ENCODE measurements at regions of chr13 and their contacts with region 1.

Region 1: GRCh38 chr13:39051157-39051556 is 12.9 kb downstream of the NHLRC3 start:
- DNase-seq: peak; percentile 24
- ATAC-seq: peak; percentile 55
- H3K4me3 ChIP-seq: no peak overlapping the region
- H3K27ac ChIP-seq: no peak overlapping the region
- H3K4me1 ChIP-seq: no peaks in the 10 kb centered on the region
- H3K27me3 ChIP-seq: no peaks in the 10 kb centered on the region
- CTCF ChIP-seq: peak; percentile 26 to 61 (median 32); a peak in 4 of 6 replicates
- POLR2A ChIP-seq: no peak
- RAD21 ChIP-seq: peak; percentile 52

Region 2: DNA sequence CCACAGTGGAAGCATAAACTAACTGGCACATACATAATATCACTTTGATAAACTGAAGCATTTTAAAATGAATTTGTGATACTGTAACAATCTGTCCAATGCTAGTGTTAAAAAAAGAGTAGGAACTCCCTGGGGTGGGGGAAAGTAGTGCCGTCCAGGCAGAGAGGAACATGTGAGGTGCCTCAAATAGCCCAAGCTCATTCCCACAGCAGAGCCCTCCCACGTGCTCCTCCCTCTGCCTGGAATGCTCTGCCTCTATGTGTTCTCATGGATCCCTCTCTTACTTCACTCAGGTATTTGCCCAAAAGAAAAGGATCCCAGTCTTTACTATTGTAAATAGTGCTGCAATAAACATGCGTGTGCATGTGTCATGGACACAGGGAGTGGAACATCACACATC is 175.2 kb after region 1 on chr13:
- CTCF ChIA-PET with region 1: no interaction called
- POLR2A ChIA-PET with region 1: no interaction called
- RAD21 ChIA-PET with region 1: no interaction called
- intact Hi-C with region 1: no loop called
- DNase-seq: no peak
- ATAC-seq: no peak
- H3K4me3 ChIP-seq: no peak overlapping the region
- H3K27ac ChIP-seq: no peak overlapping the region
- H3K4me1 ChIP-seq: no peaks in the 10 kb centered on the region
- H3K27me3 ChIP-seq: peaks cover 46% of the 10 kb centered on the region
- CTCF ChIP-seq: no peak
- POLR2A ChIP-seq: no peak
- RAD21 ChIP-seq: no peak

Region 3: DNA sequence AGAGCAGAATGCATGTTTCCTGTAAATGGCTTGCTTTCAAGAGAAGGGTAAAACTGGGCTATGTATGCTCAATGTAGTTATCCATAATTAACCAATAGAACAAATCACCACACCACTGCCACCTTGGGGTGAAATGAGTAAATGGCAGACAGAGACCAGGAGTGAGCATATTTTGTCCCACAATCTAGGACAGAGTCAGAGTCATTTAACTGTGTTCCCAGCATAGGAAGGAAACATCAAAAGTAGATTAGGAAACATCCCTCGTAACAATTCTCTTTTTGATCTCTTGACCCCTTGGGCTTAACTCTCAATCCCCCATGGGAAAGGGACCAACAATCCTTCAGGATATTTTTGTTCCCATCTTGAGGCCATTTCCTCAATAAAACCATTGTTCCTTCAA is 211.9 kb after region 1 on chr13:
- CTCF ChIA-PET with region 1: interaction called, 6 read pairs
- POLR2A ChIA-PET with region 1: no interaction called
- RAD21 ChIA-PET with region 1: no interaction called
- intact Hi-C with region 1: loop called (anchors 1 kb)
- DNase-seq: peak; percentile 24
- ATAC-seq: peak; percentile 91
- H3K4me3 ChIP-seq: no peak overlapping the region
- H3K27ac ChIP-seq: no peak overlapping the region
- H3K4me1 ChIP-seq: no peaks in the 10 kb centered on the region
- H3K27me3 ChIP-seq: peaks cover 13% of the 10 kb centered on the region
- CTCF ChIP-seq: peak; percentile 13 to 70 (median 63); a peak in 4 of 6 replicates
- POLR2A ChIP-seq: no peak
- RAD21 ChIP-seq: peak; percentile 45; the same call in 1 of the 2 replicates

Region 4: GRCh38 chr13:39415008-39415802 is 364.0 kb after region 1 on chr13:
- CTCF ChIA-PET with region 1: no interaction called
- POLR2A ChIA-PET with region 1: no interaction called
- RAD21 ChIA-PET with region 1: no interaction called
- intact Hi-C with region 1: loop called (anchors 10 kb)
- DNase-seq: peak; percentile 15
- ATAC-seq: peak; percentile 50; the same call in 1 of the 2 replicates
- H3K4me3 ChIP-seq: no peak overlapping the region
- H3K27ac ChIP-seq: no peak overlapping the region
- H3K4me1 ChIP-seq: no peaks in the 10 kb centered on the region
- H3K27me3 ChIP-seq: peaks cover 73% of the 10 kb centered on the region
- CTCF ChIP-seq: peak; percentile 19 to 55 (median 46); a peak in 4 of 6 replicates
- POLR2A ChIP-seq: no peak
- RAD21 ChIP-seq: peak; percentile 40

Region 5: DNA sequence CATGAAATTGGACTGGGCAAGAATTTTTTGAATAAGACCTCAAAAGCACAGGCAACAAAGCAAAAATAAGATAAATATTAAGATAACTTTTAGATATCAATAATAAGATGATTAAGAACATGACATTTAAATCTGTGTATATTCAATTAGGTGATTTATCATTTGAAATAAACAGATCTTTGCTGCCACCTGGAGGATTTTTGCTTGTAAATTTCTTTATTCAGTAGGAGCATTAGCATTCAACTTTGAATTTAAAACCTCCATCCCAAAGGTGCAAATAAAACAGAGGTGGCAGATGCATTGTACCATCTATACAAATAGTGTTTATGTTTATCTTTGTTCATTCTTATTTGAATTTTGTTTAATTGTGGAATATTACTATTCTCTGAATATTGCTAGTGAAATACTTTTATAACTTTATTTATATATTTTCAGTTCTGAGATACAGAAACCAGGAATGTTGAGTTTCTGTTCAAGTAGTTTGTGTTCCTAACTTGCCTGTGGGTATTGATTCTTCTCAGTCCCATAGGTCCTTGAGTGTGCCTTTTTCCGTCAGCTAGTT is 625.2 kb after region 1 on chr13:
- CTCF ChIA-PET with region 1: interaction called, 16 read pairs
- POLR2A ChIA-PET with region 1: no interaction called
- RAD21 ChIA-PET with region 1: no interaction called
- intact Hi-C with region 1: loop called (anchors 1 kb)
- DNase-seq: peak; percentile 40
- ATAC-seq: peak; percentile 49; the same call in 1 of the 2 replicates
- H3K4me3 ChIP-seq: no peak overlapping the region
- H3K27ac ChIP-seq: no peak overlapping the region
- H3K4me1 ChIP-seq: no peaks in the 10 kb centered on the region
- H3K27me3 ChIP-seq: no peaks in the 10 kb centered on the region
- CTCF ChIP-seq: peak; percentile 21 to 48 (median 28); a peak in 3 of 6 replicates
- POLR2A ChIP-seq: no peak
- RAD21 ChIP-seq: peak; percentile 42

Measured in HCT116 (cell line).